Common myeloid progenitor, CD34-positive (primary cell): ENCODE measurements at regions of chr3 and their contacts with region 1.

Region 1: DNA sequence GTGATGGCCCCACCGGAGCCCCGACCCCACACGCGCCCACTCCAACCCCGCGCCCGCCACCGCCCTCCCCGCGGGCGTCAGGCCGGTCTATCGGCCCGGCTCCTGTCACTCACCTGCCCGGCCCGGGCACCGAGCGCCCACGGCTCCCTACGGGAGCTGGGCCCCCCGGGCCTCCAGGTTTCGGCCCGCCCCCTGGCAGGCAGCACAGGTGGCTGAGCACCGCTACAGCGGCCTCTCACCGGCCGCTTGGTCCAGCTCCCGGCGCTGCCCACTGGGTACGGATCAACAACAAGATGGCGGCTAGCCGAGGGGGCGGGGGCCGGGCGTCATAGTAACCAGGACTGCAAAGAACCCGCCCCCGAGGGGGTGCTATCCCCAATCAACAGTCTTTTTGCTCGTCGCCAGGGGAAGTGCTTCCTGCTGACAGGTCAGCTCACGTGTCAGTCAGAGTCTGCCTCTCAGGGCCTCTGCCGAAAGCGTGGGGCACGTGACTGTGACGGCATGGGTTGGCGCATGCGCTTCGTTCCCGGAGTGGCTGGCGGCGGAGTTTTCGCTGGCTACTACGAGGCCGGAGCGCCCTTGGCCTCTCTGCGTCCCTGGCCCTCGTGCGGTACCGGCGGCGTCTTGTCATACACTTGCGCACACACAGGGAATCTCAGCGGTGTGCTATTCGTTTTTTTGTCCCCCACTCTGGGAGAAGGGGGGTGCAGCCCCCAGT is at the start of gene IP6K1:
- DNase-seq: peak; percentile 100
- H3K4me3 ChIP-seq: peak within 1 kb of the TSS; percentile 67 to 93 (median 89)
- H3K27ac ChIP-seq: peak within 1 kb of the TSS; percentile 94 to 96
- H3K4me1 ChIP-seq: peaks cover 5 to 40% (median 31%) of the 10 kb centered on the region in 4 experiments
- H3K27me3 ChIP-seq: no peaks in the 10 kb centered on the region

Region 2: GRCh38 chr3:49772703-49773102 is 13.7 kb before region 1 on chr3:
- CTCF ChIA-PET with region 1: interaction called, 12 read pairs
- POLR2A ChIA-PET with region 1: interaction called, 4 read pairs
- DNase-seq: no peak
- H3K4me3 ChIP-seq: no peak overlapping the region
- H3K27ac ChIP-seq: no peak overlapping the region
- H3K4me1 ChIP-seq: no peaks in the 10 kb centered on the region
- H3K27me3 ChIP-seq: no peaks in the 10 kb centered on the region